CD8-positive, alpha-beta T cell (primary cell): ENCODE measurements at regions of chr2 and their contacts with region 1.

Region 1: DNA sequence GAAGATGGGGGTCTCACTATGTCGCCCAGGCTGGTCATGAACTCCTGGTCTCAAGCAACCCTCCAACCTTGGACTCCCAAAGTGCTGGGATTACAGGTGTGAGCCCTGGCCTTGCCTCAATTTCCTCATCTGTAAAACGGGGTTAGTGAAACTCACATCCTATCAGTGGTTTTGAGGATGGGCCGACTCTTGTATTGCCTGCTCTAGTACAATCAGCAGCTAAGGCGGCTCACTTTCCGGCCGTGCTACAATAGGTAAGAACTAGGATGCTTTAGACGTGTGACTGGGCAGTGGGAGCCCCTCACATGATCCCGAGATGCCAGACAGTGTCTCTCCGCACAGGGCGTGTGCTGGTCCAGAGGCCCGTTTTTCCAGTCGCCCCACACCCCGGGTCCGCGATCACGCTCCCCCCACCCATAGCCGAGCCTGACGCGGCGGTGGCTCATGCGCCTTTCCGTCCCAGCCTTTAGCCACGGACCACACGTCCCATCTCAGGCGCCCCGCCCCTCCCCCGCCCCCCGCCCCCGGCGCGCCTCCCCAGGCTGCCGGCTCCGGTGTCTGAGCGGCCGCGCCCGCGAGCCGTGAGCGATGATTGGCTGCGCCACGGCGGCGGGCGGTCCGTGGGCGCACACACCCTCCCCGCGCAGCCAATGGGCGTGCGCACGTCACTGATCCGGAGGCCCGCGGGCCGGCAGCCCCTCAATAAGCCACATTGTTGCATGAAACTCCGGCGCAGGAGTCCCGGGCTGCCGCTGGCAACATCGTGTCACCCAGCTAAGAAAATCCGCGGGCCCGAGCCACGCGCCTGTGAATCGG is at the start of gene HK2:
- DNase-seq: peak; percentile 54 to 89 (median 78)
- ATAC-seq: peak; percentile 83
- H3K4me3 ChIP-seq: peak within 1 kb of the TSS; percentile 58 to 76
- H3K4me3 Mint-ChIP-seq: peak within 1 kb of the TSS; percentile 89
- H3K27ac ChIP-seq: peak within 1 kb of the TSS in 1 of 2 experiments; percentile 53
- H3K27ac Mint-ChIP-seq: peak within 1 kb of the TSS; percentile 85
- H3K4me1 ChIP-seq: peaks cover 25% of the 10 kb centered on the region
- H3K4me1 Mint-ChIP-seq: peaks cover 35% of the 10 kb centered on the region
- H3K27me3 ChIP-seq: peaks cover 0 to 3% of the 10 kb centered on the region in 2 experiments
- H3K27me3 Mint-ChIP-seq: no peaks in the 10 kb centered on the region
- CTCF ChIP-seq: no peak
- total RNA-seq, gene HK2: 6.5 to 8.9 TPM

Region 2: DNA sequence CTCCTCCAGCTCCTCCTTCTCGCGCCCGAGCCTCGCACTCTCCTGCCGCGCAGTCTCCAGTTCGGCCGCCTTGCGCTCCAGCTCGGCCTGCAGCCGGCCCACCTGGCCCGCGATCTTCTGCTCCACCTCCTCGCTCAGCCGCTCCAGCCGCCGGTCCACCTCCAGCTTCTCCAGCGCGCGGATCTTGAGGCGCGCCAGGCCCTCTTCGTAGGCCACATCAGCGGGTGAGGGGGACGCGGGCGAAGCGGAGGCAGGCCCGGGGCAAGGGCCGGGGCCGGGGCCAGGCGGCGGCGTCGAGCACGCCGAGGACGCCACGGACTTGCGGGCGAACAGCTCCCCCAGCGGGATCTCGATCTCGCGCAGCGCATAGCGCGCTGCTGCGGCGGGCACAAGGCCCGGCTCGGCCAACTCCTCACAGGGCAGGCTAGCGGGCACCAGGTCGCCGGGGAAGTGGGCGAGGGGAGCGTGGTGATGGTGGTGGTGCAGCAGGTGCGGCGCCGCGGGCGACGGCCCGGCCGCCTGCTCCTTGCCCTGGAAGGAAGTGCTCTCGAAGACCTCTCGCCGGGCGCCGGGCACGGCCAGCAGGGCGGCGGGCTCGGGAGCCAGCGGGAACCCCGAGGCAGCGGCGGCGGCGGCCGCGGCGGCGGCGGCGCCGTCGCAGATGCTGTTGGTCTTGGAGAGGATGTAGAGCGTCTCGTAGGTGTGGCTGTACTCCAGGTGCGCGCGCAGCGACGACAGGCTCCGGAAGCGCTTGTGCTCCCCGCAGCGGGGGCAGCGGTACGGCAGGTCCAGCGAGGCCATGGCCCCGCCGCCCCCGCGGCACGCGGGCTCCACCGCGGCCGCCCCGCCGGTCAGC is 1564.6 kb before region 1 on chr2:
- CTCF ChIA-PET with region 1: no interaction called
- POLR2A ChIA-PET with region 1: no interaction called
- intact Hi-C with region 1: loop called in 1 of 2 experiments (anchors 10 kb)
- DNase-seq: peak; percentile 52 to 90 (median 81)
- ATAC-seq: peak; percentile 98
- H3K4me3 ChIP-seq: peak overlapping the region; percentile 42 to 52
- H3K4me3 Mint-ChIP-seq: peak overlapping the region; percentile 70
- H3K27ac ChIP-seq: peak overlapping the region in 1 of 2 experiments; percentile 37
- H3K27ac Mint-ChIP-seq: no peak overlapping the region
- H3K4me1 ChIP-seq: peaks cover 12% of the 10 kb centered on the region
- H3K4me1 Mint-ChIP-seq: peaks cover 29% of the 10 kb centered on the region
- H3K27me3 ChIP-seq: no peaks in the 10 kb centered on the region
- H3K27me3 Mint-ChIP-seq: no peaks in the 10 kb centered on the region
- CTCF ChIP-seq: peak; percentile 21

Region 3: GRCh38 chr2:73970850-73971471 is 862.7 kb before region 1 on chr2:
- CTCF ChIA-PET with region 1: no interaction called
- POLR2A ChIA-PET with region 1: no interaction called
- intact Hi-C with region 1: no loop called
- DNase-seq: peak in 8 of 9 experiments; percentile 39 to 91 (median 66)
- ATAC-seq: peak; percentile 82
- H3K4me3 ChIP-seq: peak overlapping the region; percentile 16 to 20
- H3K4me3 Mint-ChIP-seq: peak overlapping the region; percentile 73
- H3K27ac ChIP-seq: peak overlapping the region; percentile 42 to 83
- H3K27ac Mint-ChIP-seq: peak overlapping the region; percentile 84
- H3K4me1 ChIP-seq: peaks cover 50% of the 10 kb centered on the region
- H3K4me1 Mint-ChIP-seq: peaks cover 73% of the 10 kb centered on the region
- H3K27me3 ChIP-seq: no peaks in the 10 kb centered on the region
- H3K27me3 Mint-ChIP-seq: no peaks in the 10 kb centered on the region
- CTCF ChIP-seq: no peak

Region 4: DNA sequence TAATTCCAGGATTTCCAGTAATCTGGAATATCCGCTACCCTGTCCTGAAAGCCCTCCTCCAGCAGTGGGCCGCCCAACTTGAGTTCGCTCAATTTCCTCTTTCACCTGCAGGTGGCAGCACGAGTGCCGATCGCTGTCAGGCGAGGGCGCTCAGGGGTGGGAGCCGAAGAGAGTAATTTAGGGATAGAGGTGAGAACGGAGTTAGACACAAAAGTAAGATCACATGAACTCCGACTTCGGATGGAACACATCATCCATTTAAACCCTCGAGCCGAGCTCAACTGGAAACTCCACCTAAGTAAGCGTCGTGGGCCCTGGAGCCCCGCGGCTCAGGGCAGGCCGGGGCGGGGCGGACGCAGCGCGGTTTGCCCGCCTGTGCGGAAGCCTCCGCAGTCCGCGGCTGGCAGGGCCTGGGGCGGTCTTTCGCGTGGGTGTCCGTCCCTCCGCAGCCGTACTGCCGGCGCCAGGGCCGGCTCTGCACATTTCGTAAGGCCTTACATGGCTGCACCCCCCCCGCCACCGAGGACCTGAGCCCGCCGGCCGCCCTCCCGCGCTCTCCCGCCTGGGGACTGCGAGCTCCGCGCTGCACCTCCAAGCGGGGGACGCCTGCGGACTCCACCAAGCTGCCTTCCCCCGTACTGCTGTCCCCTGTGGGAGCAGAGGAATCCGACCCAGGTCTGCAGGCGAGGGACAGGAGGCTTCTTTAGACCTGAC is 118.4 kb before region 1 on chr2:
- CTCF ChIA-PET with region 1: interaction called, 14 read pairs
- POLR2A ChIA-PET with region 1: interaction called, 3 read pairs
- intact Hi-C with region 1: loop called in 1 of 2 experiments (anchors 2 kb)
- DNase-seq: peak; percentile 60 to 86 (median 79)
- ATAC-seq: peak; percentile 92
- H3K4me3 ChIP-seq: peak overlapping the region; percentile 29 to 35
- H3K4me3 Mint-ChIP-seq: peak overlapping the region; percentile 94
- H3K27ac ChIP-seq: no peak overlapping the region
- H3K27ac Mint-ChIP-seq: no peak overlapping the region
- H3K4me1 ChIP-seq: peaks cover 5% of the 10 kb centered on the region
- H3K4me1 Mint-ChIP-seq: peaks cover 9% of the 10 kb centered on the region
- H3K27me3 ChIP-seq: peaks cover 0 to 2% of the 10 kb centered on the region in 2 experiments
- H3K27me3 Mint-ChIP-seq: peaks cover 17% of the 10 kb centered on the region
- CTCF ChIP-seq: peak; percentile 84

Region 5: GRCh38 chr2:74845217-74846011 is 11.8 kb after region 1 on chr2:
- CTCF ChIA-PET with region 1: interaction called, 51 read pairs
- POLR2A ChIA-PET with region 1: interaction called, 19 read pairs
- intact Hi-C with region 1: loop called in 1 of 2 experiments (anchors 1 kb)
- DNase-seq: peak in 5 of 9 experiments; percentile 15 to 43 (median 23)
- ATAC-seq: no peak
- H3K4me3 ChIP-seq: no peak overlapping the region
- H3K4me3 Mint-ChIP-seq: peak overlapping the region; percentile 37
- H3K27ac ChIP-seq: no peak overlapping the region
- H3K27ac Mint-ChIP-seq: no peak overlapping the region
- H3K4me1 ChIP-seq: peaks cover 97% of the 10 kb centered on the region
- H3K4me1 Mint-ChIP-seq: peaks cover 90% of the 10 kb centered on the region
- H3K27me3 ChIP-seq: no peaks in the 10 kb centered on the region
- H3K27me3 Mint-ChIP-seq: no peaks in the 10 kb centered on the region
- CTCF ChIP-seq: no peak